GM12878 (cell line): ENCODE measurements at regions of chr1 and their contacts with region 1.

Region 1: DNA sequence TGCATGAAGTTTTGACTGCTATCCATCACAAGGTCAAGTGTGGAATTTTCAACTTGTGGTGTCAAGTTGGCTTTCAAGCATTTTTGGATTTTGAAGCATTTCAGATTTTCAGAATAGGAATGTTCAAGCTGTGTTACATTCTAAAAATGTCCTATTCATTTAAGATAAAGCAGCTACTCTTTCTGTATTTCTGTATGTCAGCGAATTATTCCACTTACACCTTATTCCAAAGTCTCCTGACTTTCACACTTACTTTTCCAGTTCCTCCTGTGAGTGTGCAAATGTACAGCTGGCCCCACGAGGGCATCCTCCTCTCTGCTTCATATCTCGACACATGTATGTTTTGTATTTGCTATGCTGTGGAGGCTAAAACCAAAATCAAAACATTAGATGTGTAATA is 51.9 kb downstream of the RC3H1 start:
- DNase-seq: no peak
- ATAC-seq: no peak
- H3K4me3 ChIP-seq: no peak overlapping the region
- H3K27ac ChIP-seq: no peak overlapping the region
- H3K4me1 ChIP-seq: no peaks in the 10 kb centered on the region
- H3K27me3 ChIP-seq: no peaks in the 10 kb centered on the region
- CTCF ChIP-seq: no peak
- EP300 ChIP-seq: no peak
- POLR2A ChIP-seq: no peak
- RAD21 ChIP-seq: no peak

Region 2: GRCh38 chr1:173937062-173937461 is 33.2 kb before region 1 on chr1:
- CTCF ChIA-PET with region 1: interaction called, 3 read pairs
- POLR2A ChIA-PET with region 1: no interaction called
- RAD21 ChIA-PET with region 1: no interaction called
- SMC1A ChIA-PET with region 1: no interaction called
- in situ Hi-C with region 1: no loop called
- intact Hi-C with region 1: loop called (anchors 5 kb)
- DNase-seq: no peak
- ATAC-seq: peak; percentile 60
- H3K4me3 ChIP-seq: no peak overlapping the region
- H3K27ac ChIP-seq: no peak overlapping the region
- H3K4me1 ChIP-seq: no peaks in the 10 kb centered on the region
- H3K27me3 ChIP-seq: no peaks in the 10 kb centered on the region
- CTCF ChIP-seq: no peak
- EP300 ChIP-seq: no peak
- POLR2A ChIP-seq: no peak
- RAD21 ChIP-seq: no peak